CD8-positive, alpha-beta T cell (primary cell): ENCODE measurements at regions of chr3 and their contacts with region 1.

Region 1: GRCh38 chr3:46845791-46846623 is 17.2 kb downstream of the MYL3 start:
- DNase-seq: peak; percentile 55 to 86 (median 79)
- ATAC-seq: peak; percentile 95
- H3K4me3 ChIP-seq: peak overlapping the region; percentile 64 to 82
- H3K4me3 Mint-ChIP-seq: peak overlapping the region; percentile 85
- H3K27ac ChIP-seq: peak overlapping the region; percentile 32 to 36
- H3K27ac Mint-ChIP-seq: peak overlapping the region; percentile 55
- H3K4me1 ChIP-seq: peaks cover 10% of the 10 kb centered on the region
- H3K4me1 Mint-ChIP-seq: peaks cover 11% of the 10 kb centered on the region
- H3K27me3 ChIP-seq: no peaks in the 10 kb centered on the region
- H3K27me3 Mint-ChIP-seq: no peaks in the 10 kb centered on the region
- CTCF ChIP-seq: peak; percentile 68

Region 2: DNA sequence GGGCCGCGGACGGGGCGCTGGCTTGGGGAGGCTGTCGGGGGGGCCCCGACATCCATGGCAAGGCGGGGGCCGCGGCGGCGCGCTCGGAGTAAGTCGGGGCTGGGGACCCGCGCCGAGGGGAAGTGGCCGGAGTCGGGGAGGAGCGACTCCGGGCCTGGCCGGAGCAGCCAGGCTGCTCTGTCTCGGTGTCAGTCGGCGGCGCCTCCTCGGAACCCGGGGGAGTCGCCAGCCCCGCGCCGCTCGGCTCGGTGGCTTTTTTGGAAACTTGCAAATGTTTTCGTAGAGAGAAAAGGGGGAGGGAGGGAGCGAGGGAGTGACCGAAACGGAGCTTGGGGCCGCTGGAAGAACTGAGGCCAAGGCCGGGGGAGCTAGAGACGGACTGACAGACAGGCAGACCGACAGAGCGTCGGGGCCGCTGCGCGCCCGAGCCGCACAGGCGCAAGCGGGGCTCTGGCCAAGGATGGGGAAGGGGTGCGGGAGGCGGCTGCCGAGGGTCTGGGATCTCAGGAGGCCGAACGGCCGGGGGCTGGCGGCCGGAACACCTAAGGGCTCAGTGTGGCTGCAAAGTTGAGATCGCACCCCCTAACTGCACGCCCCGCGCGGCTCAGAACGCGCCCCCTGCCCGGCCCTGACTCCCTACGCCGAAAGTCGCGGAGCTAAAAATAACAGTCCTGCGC is 36.5 kb after region 1 on chr3:
- CTCF ChIA-PET with region 1: no interaction called
- POLR2A ChIA-PET with region 1: no interaction called
- intact Hi-C with region 1: loop called in 1 of 2 experiments (anchors 2 kb)
- DNase-seq: no peak
- ATAC-seq: peak; percentile 26
- H3K4me3 ChIP-seq: peak overlapping the region; percentile 38 to 43
- H3K4me3 Mint-ChIP-seq: peak overlapping the region; percentile 76
- H3K27ac ChIP-seq: no peak overlapping the region
- H3K27ac Mint-ChIP-seq: no peak overlapping the region
- H3K4me1 ChIP-seq: no peaks in the 10 kb centered on the region
- H3K4me1 Mint-ChIP-seq: peaks cover 13% of the 10 kb centered on the region
- H3K27me3 ChIP-seq: peaks cover 18 to 19% of the 10 kb centered on the region in 2 experiments
- H3K27me3 Mint-ChIP-seq: peaks cover 34% of the 10 kb centered on the region
- CTCF ChIP-seq: no peak